ENCODE measurements at regions of chr3 and their contacts with region 1.

Region 1: GRCh38 chr3:181326637-181327223 is 337.2 kb upstream of the DNAJC19 start:
- DNase-seq: no peak
- H3K4me3 ChIP-seq: no peak overlapping the region
- H3K27ac ChIP-seq: no peak overlapping the region
- H3K4me1 ChIP-seq: peaks cover 0 to 14% of the 10 kb centered on the region in 2 donors
- H3K27me3 ChIP-seq: no peaks in the 10 kb centered on the region
- CTCF ChIP-seq: peak; percentile 22 to 68 (median 43)
- POLR2A ChIP-seq: no peak

Region 2: GRCh38 chr3:181052256-181052655 is 274.5 kb before region 1 on chr3:
- intact Hi-C with region 1: no loop called
- DNase-seq: no peak
- H3K4me3 ChIP-seq: no peak overlapping the region
- H3K27ac ChIP-seq: no peak overlapping the region
- H3K4me1 ChIP-seq: no peaks in the 10 kb centered on the region
- H3K27me3 ChIP-seq: no peaks in the 10 kb centered on the region
- CTCF ChIP-seq: no peak
- POLR2A ChIP-seq: no peak

Region 3: GRCh38 chr3:181176601-181177000 is 150.1 kb before region 1 on chr3:
- intact Hi-C with region 1: no loop called
- DNase-seq: peak; percentile 60 to 87 (median 80)
- H3K4me3 ChIP-seq: no peak overlapping the region
- H3K27ac ChIP-seq: no peak overlapping the region
- H3K4me1 ChIP-seq: no peaks in the 10 kb centered on the region
- H3K27me3 ChIP-seq: no peaks in the 10 kb centered on the region
- CTCF ChIP-seq: peak; percentile 35 to 76 (median 68)
- POLR2A ChIP-seq: no peak

Region 4: GRCh38 chr3:181252631-181253030 is 74.1 kb before region 1 on chr3:
- intact Hi-C with region 1: no loop called
- DNase-seq: no peak
- H3K4me3 ChIP-seq: no peak overlapping the region
- H3K27ac ChIP-seq: no peak overlapping the region
- H3K4me1 ChIP-seq: no peaks in the 10 kb centered on the region
- H3K27me3 ChIP-seq: no peaks in the 10 kb centered on the region
- CTCF ChIP-seq: no peak
- POLR2A ChIP-seq: no peak

Region 5: DNA sequence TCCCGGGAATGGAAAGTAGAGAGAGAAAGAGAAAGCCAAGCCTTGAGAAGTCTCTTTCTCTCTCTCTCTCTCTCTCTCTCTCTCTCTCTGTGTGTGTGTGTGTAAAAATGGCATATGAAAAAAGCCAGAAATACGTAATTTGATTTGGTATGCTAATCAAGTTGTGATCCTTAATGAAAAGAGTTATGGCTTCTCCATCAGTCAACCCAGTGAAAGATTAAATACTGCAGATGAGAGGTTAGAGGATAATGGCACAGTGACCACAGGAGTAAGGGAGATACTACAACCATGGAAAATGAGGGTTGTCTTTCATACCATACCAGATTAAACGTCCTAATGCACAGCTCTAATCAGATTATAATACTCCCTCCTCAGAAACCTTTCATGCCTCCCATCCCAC is 191.5 kb after region 1 on chr3:
- intact Hi-C with region 1: no loop called
- DNase-seq: no peak
- H3K4me3 ChIP-seq: no peak overlapping the region
- H3K27ac ChIP-seq: no peak overlapping the region
- H3K4me1 ChIP-seq: no peaks in the 10 kb centered on the region
- H3K27me3 ChIP-seq: no peaks in the 10 kb centered on the region
- CTCF ChIP-seq: no peak
- POLR2A ChIP-seq: no peak

Region 6: GRCh38 chr3:181694805-181695660 is 368.3 kb after region 1 on chr3:
- intact Hi-C with region 1: loop called (anchors 5 to 10 kb)
- DNase-seq: peak in 5 of 7 donors; percentile 25 to 63 (median 29)
- H3K4me3 ChIP-seq: peak overlapping the region in 1 of 4 donors; percentile 44
- H3K27ac ChIP-seq: peak overlapping the region in 1 of 5 donors; percentile 4
- H3K4me1 ChIP-seq: peaks cover 5 to 14% of the 10 kb centered on the region in 2 donors
- H3K27me3 ChIP-seq: peaks cover 41% of the 10 kb centered on the region
- CTCF ChIP-seq: peak in 1 of 6 experiments; percentile 4
- POLR2A ChIP-seq: no peak

Region 7: GRCh38 chr3:181700168-181701087 is 373.7 kb after region 1 on chr3:
- intact Hi-C with region 1: loop called (anchors 5 to 10 kb)
- DNase-seq: peak; percentile 51 to 80 (median 68)
- H3K4me3 ChIP-seq: no peak overlapping the region
- H3K27ac ChIP-seq: no peak overlapping the region
- H3K4me1 ChIP-seq: peaks cover 13 to 19% of the 10 kb centered on the region in 2 donors
- H3K27me3 ChIP-seq: peaks cover 87% of the 10 kb centered on the region
- CTCF ChIP-seq: peak; percentile 65 to 94 (median 76)
- POLR2A ChIP-seq: no peak